BJ (cell line): ENCODE measurements at regions of chr5 and their contacts with region 1.

Region 1: GRCh38 chr5:174910245-174910737 is 185.9 kb downstream of the MSX2 start:
- DNase-seq: no peak
- H3K4me3 ChIP-seq: no peak overlapping the region; the same call in 1 of the 2 replicates
- H3K27me3 ChIP-seq: no peaks in the 10 kb centered on the region
- CTCF ChIP-seq: peak; percentile 91

Region 2: DNA sequence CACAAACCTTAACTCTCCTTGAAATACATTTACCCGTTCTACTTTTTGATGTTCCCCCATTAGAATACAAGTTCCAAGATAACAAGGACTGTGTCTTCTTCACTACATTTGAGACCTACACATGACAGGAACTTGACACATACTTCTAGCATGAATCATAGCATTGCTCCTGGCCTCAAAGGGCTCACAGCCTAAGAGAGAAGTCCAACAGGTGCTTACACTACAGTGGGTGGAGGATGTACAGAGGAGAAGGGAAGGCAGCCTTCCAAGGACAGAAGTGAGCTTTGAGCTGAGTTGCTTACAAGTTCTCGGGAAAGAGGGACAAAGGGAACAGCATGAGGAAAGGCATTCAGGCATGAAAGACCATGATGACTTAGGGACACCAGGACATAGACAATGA is 242.8 kb before region 1 on chr5:
- CTCF ChIA-PET with region 1: no interaction called
- POLR2A ChIA-PET with region 1: no interaction called
- DNase-seq: no peak
- H3K4me3 ChIP-seq: no peak overlapping the region
- H3K27me3 ChIP-seq: no peaks in the 10 kb centered on the region
- CTCF ChIP-seq: no peak

Region 3: GRCh38 chr5:174764262-174764661 is 146.0 kb before region 1 on chr5:
- CTCF ChIA-PET with region 1: no interaction called
- POLR2A ChIA-PET with region 1: no interaction called
- DNase-seq: no peak
- H3K4me3 ChIP-seq: no peak overlapping the region
- H3K27me3 ChIP-seq: no peaks in the 10 kb centered on the region
- CTCF ChIP-seq: no peak

Region 4: DNA sequence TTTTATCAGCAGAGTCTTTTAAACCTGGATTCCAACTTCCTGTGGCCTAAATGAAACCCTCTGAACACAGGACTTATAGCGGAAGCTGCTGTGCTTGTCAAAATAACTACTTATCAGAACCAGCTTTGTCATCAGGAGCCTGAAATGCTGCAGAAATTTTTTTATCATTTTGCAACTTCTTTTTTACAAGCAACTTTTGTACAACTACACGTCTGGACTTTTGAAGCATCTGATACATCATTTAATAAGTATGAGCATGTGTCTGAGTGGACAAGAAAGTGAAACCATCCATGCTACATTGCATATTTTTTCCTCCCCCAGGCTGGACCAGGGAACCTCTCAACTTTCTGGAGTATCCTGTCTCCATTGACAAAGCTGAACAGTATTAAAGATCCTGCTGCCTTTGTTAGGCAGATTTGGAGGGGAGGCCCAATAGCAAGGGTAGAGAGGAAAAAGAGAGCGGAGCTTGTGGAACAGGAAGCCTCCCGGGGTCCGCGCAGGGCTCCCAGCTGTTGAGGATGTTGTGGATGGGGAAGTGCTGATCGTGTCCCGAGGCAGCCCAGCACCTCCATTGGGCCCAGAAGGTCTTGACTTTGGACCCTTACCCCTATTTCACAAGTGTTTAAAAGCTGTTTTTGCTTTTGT is 10.7 kb after region 1 on chr5:
- CTCF ChIA-PET with region 1: interaction called, 13 read pairs
- POLR2A ChIA-PET with region 1: no interaction called
- DNase-seq: no peak
- H3K4me3 ChIP-seq: no peak overlapping the region
- H3K27me3 ChIP-seq: no peaks in the 10 kb centered on the region
- CTCF ChIP-seq: no peak

Region 5: GRCh38 chr5:174935854-174936474 is 25.7 kb after region 1 on chr5:
- CTCF ChIA-PET with region 1: interaction called, 10 read pairs
- POLR2A ChIA-PET with region 1: no interaction called
- DNase-seq: no peak
- H3K4me3 ChIP-seq: no peak overlapping the region
- H3K27me3 ChIP-seq: no peaks in the 10 kb centered on the region
- CTCF ChIP-seq: peak; percentile 92

Region 6: DNA sequence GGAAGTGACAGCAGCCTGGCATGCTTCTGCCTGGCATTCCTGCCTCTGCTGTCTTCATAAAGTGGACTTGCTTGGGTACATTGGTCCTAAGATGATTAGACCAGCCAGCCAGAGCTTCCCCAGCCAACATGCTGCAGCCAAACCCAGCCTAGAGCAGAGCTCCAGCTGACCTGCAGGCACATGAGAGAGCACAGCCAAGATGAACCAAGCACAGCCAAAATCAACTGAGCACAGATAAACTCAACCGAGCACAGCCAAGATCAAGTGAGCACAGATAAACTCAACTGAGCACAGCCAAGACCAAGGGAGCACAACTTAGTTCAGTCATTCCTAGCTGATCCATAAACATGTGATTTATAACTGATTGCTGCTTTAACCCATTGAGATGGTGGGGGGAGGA is 80.6 kb after region 1 on chr5:
- CTCF ChIA-PET with region 1: no interaction called
- POLR2A ChIA-PET with region 1: no interaction called
- DNase-seq: no peak
- H3K4me3 ChIP-seq: no peak overlapping the region
- H3K27me3 ChIP-seq: no peaks in the 10 kb centered on the region
- CTCF ChIP-seq: no peak